ENCODE measurements at regions of chr1 and their contacts with region 1.

Region 1: DNA sequence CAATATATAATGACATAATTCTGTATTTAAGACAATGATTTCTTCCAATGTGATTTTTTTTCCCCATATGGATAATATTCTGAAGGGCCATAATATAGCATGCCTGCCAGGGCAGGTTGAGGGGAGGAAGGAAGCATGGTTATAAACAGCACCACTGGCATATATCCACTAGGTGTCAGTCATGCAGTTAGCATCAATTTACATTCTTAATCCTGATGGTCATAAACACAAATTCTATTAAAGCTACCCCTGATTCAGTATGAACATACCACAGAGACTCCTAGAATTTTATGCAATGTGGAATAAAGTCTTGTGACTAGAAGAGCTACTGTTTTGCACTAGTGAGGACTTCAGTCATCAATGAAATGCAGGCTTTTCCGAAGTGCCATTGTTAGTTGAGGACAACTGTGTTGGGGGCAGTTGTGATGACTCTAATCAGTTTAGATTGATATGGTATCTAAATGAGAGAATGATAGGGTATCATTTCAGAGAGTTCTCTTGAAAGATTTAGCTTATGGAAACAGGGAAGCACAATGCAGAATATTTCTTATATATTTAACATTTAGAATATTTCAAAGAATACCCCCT is 342.7 kb upstream of the NR5A2 start:
- DNase-seq: peak; percentile 74
- ATAC-seq: peak; percentile 91
- H3K4me3 ChIP-seq: peak overlapping the region in 1 of 2 experiments; percentile 18; a peak in 1 of 4 replicates
- H3K27ac ChIP-seq: peak overlapping the region; percentile 30; the same call in 1 of the 2 replicates
- H3K4me1 ChIP-seq: peaks cover 14 to 49% of the 10 kb centered on the region in 2 experiments
- H3K27me3 ChIP-seq: no peaks in the 10 kb centered on the region
- CTCF ChIP-seq: peak; percentile 67 to 88 (median 75)
- POLR2A ChIP-seq: no peak
- RAD21 ChIP-seq: peak; percentile 93

Region 2: GRCh38 chr1:198756470-198756869 is 928.3 kb before region 1 on chr1:
- CTCF ChIA-PET with region 1: no interaction called
- POLR2A ChIA-PET with region 1: no interaction called
- RAD21 ChIA-PET with region 1: no interaction called
- intact Hi-C with region 1: loop called (anchors 5 kb)
- DNase-seq: no peak
- ATAC-seq: peak; percentile 50; the same call in 1 of the 2 replicates
- H3K4me3 ChIP-seq: no peak overlapping the region
- H3K27ac ChIP-seq: no peak overlapping the region
- H3K4me1 ChIP-seq: no peaks in the 10 kb centered on the region
- H3K27me3 ChIP-seq: no peaks in the 10 kb centered on the region
- CTCF ChIP-seq: peak in 1 of 3 experiments; percentile 7; a peak in 1 of 6 replicates
- POLR2A ChIP-seq: no peak
- RAD21 ChIP-seq: peak; percentile 50

Region 3: DNA sequence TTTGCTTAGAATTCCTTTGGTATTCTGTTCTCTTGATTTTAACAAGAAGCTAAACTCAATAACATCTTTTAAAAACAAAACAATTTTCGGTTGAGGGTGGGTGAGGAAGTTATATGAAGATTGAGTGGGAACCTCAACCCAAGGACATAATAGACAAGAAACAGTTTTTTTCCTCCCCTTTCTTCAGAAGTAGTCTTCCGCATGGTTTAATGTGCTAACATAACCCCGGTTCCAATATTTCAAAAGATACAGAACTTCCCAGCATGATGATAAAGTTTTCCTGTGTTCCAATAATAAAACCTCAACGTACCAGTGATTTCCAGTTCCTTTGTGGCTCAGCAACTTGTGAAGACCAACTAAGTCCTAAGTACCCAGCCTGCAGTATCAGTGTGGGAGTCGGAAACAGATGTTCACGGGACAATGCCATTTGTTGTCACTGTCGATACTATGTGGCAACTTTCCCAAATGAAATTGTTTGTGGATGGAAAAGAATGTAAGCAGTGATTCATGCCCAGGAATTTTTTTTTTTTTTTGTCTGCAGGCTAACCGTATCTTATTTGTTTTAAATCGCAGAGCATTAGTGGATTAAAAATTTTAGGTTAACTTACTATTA is 391.3 kb after region 1 on chr1:
- CTCF ChIA-PET with region 1: no interaction called
- POLR2A ChIA-PET with region 1: no interaction called
- RAD21 ChIA-PET with region 1: no interaction called
- intact Hi-C with region 1: loop called (anchors 10 kb)
- DNase-seq: peak; percentile 58
- ATAC-seq: peak; percentile 87
- H3K4me3 ChIP-seq: peak overlapping the region in 1 of 2 experiments; percentile 20; a peak in 1 of 4 replicates
- H3K27ac ChIP-seq: no peak overlapping the region
- H3K4me1 ChIP-seq: peaks cover 6 to 21% of the 10 kb centered on the region in 2 experiments
- H3K27me3 ChIP-seq: no peaks in the 10 kb centered on the region
- CTCF ChIP-seq: no peak
- POLR2A ChIP-seq: no peak
- RAD21 ChIP-seq: no peak

Region 4: GRCh38 chr1:200279810-200280411 is 595.1 kb after region 1 on chr1:
- CTCF ChIA-PET with region 1: interaction called, 10 read pairs
- POLR2A ChIA-PET with region 1: no interaction called
- RAD21 ChIA-PET with region 1: no interaction called
- intact Hi-C with region 1: loop called (anchors 1 kb)
- DNase-seq: peak; percentile 55
- ATAC-seq: peak; percentile 97
- H3K4me3 ChIP-seq: no peak overlapping the region
- H3K27ac ChIP-seq: no peak overlapping the region
- H3K4me1 ChIP-seq: no peaks in the 10 kb centered on the region
- H3K27me3 ChIP-seq: no peaks in the 10 kb centered on the region
- CTCF ChIP-seq: peak; percentile 69 to 88 (median 79)
- POLR2A ChIP-seq: no peak
- RAD21 ChIP-seq: peak; percentile 89

Region 5: GRCh38 chr1:200488375-200489165 is 803.8 kb after region 1 on chr1:
- CTCF ChIA-PET with region 1: no interaction called
- POLR2A ChIA-PET with region 1: no interaction called
- RAD21 ChIA-PET with region 1: no interaction called
- intact Hi-C with region 1: loop called (anchors 1 kb)
- DNase-seq: peak; percentile 56
- ATAC-seq: peak; percentile 83
- H3K4me3 ChIP-seq: no peak overlapping the region
- H3K27ac ChIP-seq: no peak overlapping the region
- H3K4me1 ChIP-seq: peaks cover 6 to 19% of the 10 kb centered on the region in 2 experiments; a peak in 3 of 4 replicates
- H3K27me3 ChIP-seq: no peaks in the 10 kb centered on the region
- CTCF ChIP-seq: peak; percentile 77 to 93 (median 91)
- POLR2A ChIP-seq: no peak
- RAD21 ChIP-seq: peak; percentile 97